Gastrocnemius medialis (tissue), 4 donors: ENCODE measurements at regions of chr1 and their contacts with region 1.

Region 1: GRCh38 chr1:94463765-94464330 is 45.7 kb downstream of the ABCD3 start:
- DNase-seq: no peak
- ATAC-seq: peak; percentile 69 to 78
- H3K4me3 ChIP-seq: no peak overlapping the region
- H3K27ac ChIP-seq: no peak overlapping the region
- H3K4me1 ChIP-seq: peaks cover 0 to 6% of the 10 kb centered on the region in 2 donors
- H3K27me3 ChIP-seq: no peaks in the 10 kb centered on the region
- CTCF ChIP-seq: peak; percentile 29 to 57 (median 51)
- POLR2A ChIP-seq: no peak

Region 2: GRCh38 chr1:94396356-94397010 is 67.4 kb before region 1 on chr1:
- in situ Hi-C with region 1: no loop called
- intact Hi-C with region 1: loop called (anchors 2 kb)
- DNase-seq: no peak
- ATAC-seq: no peak
- H3K4me3 ChIP-seq: no peak overlapping the region
- H3K27ac ChIP-seq: no peak overlapping the region
- H3K4me1 ChIP-seq: no peaks in the 10 kb centered on the region
- H3K27me3 ChIP-seq: no peaks in the 10 kb centered on the region
- CTCF ChIP-seq: peak in 1 of 5 experiments; percentile 36
- POLR2A ChIP-seq: no peak